PC-9 (cell line): ENCODE measurements at regions of chr3 and their contacts with region 1.

Region 1: DNA sequence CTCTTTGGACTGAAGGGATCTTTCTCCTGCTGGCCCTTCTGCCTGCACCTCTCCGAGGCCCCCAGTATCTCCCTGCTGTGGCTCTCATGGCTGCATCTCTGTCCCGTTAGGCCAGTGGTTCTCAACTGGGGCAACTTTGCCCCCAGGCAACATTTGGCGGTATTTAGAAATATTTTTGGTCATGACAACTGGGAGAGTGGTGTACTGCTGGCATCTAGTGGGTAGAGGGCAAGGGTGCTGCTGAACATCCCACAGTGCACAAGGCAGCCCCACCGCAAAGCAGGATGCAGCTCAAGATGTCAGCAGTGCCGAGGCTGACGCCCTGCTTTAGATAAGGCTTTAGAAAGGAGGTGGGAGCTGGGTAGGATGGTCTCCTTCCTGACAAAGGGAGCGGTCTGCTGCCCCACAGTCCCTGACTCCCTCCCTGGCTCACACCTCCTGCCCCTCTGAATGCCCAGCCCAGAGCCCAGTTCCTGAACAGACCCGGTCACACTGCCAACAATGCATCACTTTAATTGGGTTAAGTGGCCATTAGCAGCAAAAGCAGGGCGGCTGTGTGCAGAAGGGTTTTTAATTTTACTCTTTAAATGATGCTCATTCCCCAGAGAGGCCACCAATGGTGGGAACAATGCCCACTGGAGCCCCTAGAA is 68.8 kb upstream of the TMEM115 start:
- DNase-seq: peak; percentile 43 to 52
- H3K4me3 ChIP-seq: no peak overlapping the region
- H3K27ac ChIP-seq: no peak overlapping the region
- H3K4me1 ChIP-seq: no peaks in the 10 kb centered on the region
- H3K27me3 ChIP-seq: peaks cover 8% of the 10 kb centered on the region; the same call in 1 of the 2 replicates
- CTCF ChIP-seq: peak; percentile 55; the same call in 1 of the 2 replicates

Region 2: DNA sequence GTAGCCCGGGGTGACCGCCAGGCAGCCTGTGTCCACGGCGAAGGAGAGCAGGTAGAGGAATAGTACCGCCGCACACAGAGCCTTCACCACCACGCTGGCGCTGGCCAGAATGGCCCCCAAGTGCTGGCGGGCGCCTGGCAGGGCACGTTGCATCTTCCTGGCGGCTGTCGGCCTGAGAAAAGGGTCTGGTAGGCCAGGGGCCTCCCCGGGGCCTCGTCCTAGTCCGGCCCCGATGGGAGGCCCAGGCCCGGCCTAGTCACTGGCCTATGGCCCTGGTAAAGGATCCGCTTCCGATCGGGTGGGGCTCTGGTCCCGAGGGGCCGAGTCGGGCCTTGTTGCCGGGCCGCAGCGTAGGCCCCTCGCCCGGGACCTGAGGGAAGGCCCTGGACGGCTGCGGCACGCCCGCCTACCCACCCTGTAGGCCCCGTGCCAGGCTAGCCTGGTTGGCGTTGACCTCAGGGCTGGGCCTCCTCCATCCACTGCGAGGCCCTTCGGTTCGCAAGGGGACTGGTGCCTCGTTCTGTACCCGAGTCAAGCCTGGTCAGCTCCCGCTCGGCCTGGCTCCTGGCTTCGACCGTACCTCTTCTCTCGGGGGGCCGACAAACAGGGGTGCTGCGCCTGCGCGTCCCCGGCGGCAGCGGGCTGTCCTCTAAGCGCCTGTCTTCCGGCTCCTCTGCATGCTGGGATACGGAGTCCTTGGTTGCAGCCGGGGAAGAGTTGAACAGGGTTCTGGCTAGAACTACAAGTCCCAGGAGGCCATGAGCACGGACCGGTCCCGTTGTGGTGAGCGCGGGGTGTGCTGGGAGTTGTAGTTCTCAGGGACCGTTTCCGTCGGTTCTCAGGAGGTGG is 69.0 kb before region 1 on chr3 and contains the start of gene TMEM115:
- CTCF ChIA-PET with region 1: no interaction called
- POLR2A ChIA-PET with region 1: no interaction called
- intact Hi-C with region 1: no loop called
- DNase-seq: peak; percentile 92 to 93
- H3K4me3 ChIP-seq: peak within 1 kb of the TSS; percentile 86
- H3K27ac ChIP-seq: no peak within 1 kb of the TSS
- H3K4me1 ChIP-seq: peaks cover 27% of the 10 kb centered on the region
- H3K27me3 ChIP-seq: no peaks in the 10 kb centered on the region
- CTCF ChIP-seq: no peak
- total RNA-seq, gene TMEM115: 35.2 and 43.5 TPM in 2 replicates

Region 3: GRCh38 chr3:50370594-50370993 is 57.5 kb before region 1 on chr3:
- CTCF ChIA-PET with region 1: no interaction called
- POLR2A ChIA-PET with region 1: no interaction called
- intact Hi-C with region 1: loop called (anchors 2 kb)
- DNase-seq: peak in 1 of 2 experiments; percentile 30
- H3K4me3 ChIP-seq: no peak overlapping the region
- H3K27ac ChIP-seq: no peak overlapping the region
- H3K4me1 ChIP-seq: no peaks in the 10 kb centered on the region
- H3K27me3 ChIP-seq: peaks cover 29% of the 10 kb centered on the region
- CTCF ChIP-seq: peak; percentile 50; the same call in 1 of the 2 replicates

Region 4: GRCh38 chr3:50454481-50455070 is 26.5 kb after region 1 on chr3:
- CTCF ChIA-PET with region 1: no interaction called
- POLR2A ChIA-PET with region 1: no interaction called
- intact Hi-C with region 1: no loop called
- DNase-seq: no peak
- H3K4me3 ChIP-seq: no peak overlapping the region
- H3K27ac ChIP-seq: no peak overlapping the region
- H3K4me1 ChIP-seq: no peaks in the 10 kb centered on the region
- H3K27me3 ChIP-seq: peaks cover 48% of the 10 kb centered on the region
- CTCF ChIP-seq: no peak

Region 5: DNA sequence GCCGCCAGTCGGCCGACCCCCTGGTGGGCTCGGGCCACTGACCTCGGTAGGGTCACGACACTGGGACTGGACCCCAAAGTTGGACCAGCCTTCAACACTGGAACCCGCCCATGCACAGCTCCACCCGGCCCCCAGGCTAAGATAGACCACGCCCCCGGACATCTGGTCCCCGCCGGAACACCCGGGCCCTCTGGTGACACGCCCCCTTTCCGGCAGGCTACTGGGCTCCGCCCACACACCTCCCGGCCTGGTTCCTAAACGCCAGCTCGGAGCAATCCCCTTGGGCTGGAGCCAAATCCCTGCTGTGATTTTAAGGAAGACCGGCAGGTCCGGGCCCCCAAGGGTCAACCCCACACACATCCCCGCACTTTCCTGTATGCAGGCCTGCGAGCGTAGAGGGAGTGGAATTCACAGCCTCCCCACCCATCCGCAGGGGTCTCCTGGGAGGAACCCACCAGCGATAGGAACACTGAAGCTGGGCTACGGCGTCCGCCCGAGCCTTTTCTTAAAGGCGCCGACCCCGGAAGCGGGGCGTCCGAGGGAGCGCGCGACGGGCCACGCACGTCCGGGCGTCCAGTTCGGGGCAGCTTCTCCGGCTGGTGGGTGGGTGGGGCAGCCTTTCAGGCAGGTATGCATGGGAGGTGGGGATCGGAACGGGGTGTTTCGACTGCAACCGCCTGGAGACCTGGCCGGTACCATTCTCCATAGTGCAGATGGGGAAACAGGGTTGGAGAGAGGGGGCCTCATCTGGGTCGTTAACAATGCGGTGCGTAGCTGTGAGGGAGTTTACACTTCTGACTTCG is 141.0 kb after region 1 on chr3 and contains the start of gene HEMK1:
- CTCF ChIA-PET with region 1: interaction called, 11 read pairs
- POLR2A ChIA-PET with region 1: no interaction called
- intact Hi-C with region 1: no loop called
- DNase-seq: peak; percentile 82 to 96
- H3K4me3 ChIP-seq: peak within 1 kb of the TSS; percentile 94
- H3K27ac ChIP-seq: 0 out of 2 replicates have a peak within 1 kb of the TSS, but pooled peaks have one; percentile 24
- H3K4me1 ChIP-seq: peaks cover 13% of the 10 kb centered on the region
- H3K27me3 ChIP-seq: no peaks in the 10 kb centered on the region
- CTCF ChIP-seq: no peak
- total RNA-seq, gene HEMK1: 20.6 and 24.2 TPM in 2 replicates